Activated B cell treated with CpG ODN at 0.5 μM for 24 hours (primary cell): ENCODE measurements at regions of chr6 and their contacts with region 1.

Region 1: DNA sequence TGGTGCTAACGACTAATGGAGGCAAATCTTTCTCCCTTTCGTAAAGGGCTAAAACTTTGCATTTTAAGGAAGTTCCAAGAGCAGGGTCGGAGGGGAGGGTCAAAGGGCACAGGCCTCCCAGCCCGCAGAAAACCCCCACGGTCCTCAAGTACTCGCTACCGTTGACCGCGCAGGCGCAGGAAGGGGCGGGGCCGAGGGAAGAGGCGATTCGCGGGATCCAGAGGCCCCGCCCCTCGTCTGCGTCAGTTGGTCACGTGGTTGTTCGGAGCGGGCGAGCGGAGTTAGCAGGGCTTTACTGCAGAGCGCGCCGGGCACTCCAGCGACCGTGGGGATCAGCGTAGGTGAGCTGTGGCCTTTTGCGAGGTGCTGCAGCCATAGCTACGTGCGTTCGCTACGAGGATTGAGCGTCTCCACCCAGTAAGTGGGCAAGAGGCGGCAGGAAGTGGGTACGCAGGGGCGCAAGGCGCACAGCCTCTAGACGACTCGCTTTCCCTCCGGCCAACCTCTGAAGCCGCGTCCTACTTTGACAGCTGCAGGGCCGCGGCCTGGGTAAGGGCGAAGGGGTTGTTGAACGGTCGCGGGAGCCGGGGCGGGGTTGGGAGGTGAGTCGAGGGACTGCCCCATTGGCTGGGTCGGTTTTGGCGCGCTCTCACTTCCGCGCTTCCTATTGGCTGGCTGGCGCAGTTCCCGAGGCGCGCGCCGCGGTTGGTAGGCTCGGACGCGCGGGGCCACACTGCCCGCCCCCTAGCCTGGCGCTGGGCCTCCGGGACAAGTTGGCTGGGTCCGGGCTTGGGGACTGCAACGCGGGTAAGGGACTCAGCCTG is at the start of gene GMNN:
- DNase-seq: peak; percentile 99
- ATAC-seq: peak; percentile 90
- H3K4me3 Mint-ChIP-seq: peak within 1 kb of the TSS; percentile 97
- H3K27ac Mint-ChIP-seq: peak within 1 kb of the TSS; percentile 92
- H3K4me1 Mint-ChIP-seq: peaks cover 22% of the 10 kb centered on the region
- H3K27me3 Mint-ChIP-seq: no peaks in the 10 kb centered on the region
- CTCF ChIP-seq: no peak
- total RNA-seq, gene GMNN: 12.9 and 14.5 TPM in 2 replicates

Region 2: DNA sequence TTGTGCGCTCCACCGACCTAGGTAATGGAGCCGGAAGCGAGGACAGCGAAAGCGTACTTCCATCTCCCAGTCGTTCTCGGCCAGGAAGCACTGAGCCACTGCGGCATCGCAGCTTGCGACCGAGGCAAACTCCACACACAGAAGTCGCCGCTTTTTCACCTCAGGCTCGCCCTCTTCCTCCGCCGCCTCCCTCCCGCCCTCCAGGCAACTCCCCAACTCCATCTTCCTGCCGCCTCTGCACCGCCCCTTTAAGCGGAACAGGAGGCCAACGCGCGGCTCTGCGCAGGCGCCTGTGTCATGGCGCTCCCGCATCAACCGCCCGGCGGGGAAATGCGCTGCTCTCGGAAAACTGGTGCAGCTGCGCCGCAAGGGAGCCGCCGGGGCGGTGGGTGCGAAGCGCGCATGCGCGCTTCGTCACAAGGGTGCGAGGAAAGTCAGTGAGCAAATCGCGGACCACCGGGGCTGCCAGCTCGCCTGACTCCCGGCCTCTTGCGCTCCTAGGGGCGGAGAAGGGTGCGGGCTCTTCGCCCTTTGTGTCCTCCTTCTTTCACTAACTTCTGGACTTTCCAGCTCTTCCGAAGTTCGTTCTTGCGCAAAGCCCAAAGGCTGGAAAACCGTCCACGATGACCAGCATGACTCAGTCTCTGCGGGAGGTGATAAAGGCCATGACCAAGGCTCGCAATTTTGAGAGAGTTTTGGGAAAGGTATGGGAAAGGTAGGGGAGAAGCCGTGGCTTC is 108.1 kb before region 1 on chr6 and contains the starts of genes ACOT13 and TDP2:
- CTCF ChIA-PET with region 1: no interaction called
- POLR2A ChIA-PET with region 1: no interaction called
- intact Hi-C with region 1: loop called (anchors 1 kb)
- DNase-seq: peak; percentile 92
- ATAC-seq: peak; percentile 94
- H3K4me3 Mint-ChIP-seq: peak within 1 kb of the TSS; percentile 99
- H3K27ac Mint-ChIP-seq: peak within 1 kb of the TSS; percentile 96
- H3K4me1 Mint-ChIP-seq: peaks cover 46% of the 10 kb centered on the region
- H3K27me3 Mint-ChIP-seq: no peaks in the 10 kb centered on the region
- CTCF ChIP-seq: no peak
- total RNA-seq, gene ACOT13: 12.0 and 13.8 TPM in 2 replicates
- total RNA-seq, gene TDP2: 48.9 and 51.1 TPM in 2 replicates

Region 3: DNA sequence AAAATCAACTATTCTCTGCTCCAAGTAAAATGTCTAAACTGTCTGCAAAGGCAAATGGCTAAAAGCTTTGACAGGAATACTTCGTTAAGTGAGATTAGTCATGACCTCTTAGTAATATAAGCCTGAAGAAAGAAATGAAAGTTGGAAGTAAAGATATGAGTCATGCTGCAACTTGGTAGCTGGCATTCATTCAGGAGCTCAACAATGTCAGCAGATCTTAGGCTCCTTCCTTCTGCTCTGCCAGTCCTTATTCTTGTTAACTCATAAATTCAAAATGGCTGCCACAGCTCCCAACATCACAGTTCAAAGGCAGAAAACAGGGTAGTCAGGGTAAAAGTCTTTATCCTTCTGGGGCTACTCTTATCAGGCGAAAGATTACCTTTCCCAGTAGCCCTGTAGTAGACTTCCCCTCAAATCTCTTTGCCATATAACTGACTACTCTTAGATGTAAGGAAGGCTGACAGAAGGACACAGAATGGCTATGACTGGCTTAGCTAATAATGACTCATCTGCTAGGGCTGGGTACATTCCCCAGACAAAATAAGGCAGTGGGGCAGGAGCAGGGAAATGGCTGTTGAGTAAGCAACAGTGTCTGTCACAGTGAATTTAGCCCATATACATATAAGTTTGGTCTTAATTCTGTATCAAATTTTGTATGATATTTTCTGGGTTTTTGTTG is 31.5 kb before region 1 on chr6:
- CTCF ChIA-PET with region 1: no interaction called
- POLR2A ChIA-PET with region 1: no interaction called
- intact Hi-C with region 1: loop called (anchors 2 kb)
- DNase-seq: no peak
- ATAC-seq: peak; percentile 78
- H3K4me3 Mint-ChIP-seq: peak overlapping the region; percentile 55
- H3K27ac Mint-ChIP-seq: peak overlapping the region; percentile 85
- H3K4me1 Mint-ChIP-seq: peaks cover 31% of the 10 kb centered on the region
- H3K27me3 Mint-ChIP-seq: no peaks in the 10 kb centered on the region
- CTCF ChIP-seq: no peak